Esophagus squamous epithelium (tissue), 5 donors: ENCODE measurements at regions of chr4 and their contacts with region 1.

Region 1: DNA sequence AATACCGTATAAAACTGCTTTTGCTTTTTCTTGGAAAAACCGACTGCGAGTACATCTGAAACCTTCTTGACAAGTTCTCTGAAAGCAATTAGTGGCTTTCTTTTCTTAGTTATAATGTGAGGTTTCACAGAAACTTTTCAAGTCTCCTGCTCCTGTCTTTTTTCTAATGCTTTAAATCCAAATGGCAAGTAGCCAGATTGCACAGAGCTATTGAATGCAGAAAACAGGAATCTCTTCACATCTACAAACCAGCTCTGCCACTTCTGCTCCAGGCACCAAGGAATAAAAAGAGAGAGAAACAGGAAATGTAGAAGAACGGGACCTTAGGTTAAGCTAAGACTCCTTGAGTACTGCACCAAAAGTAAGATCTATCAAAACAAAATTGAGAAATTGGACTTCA is 267.3 kb upstream of the TET2 start:
- DNase-seq: no peak
- H3K4me3 ChIP-seq: no peak overlapping the region
- H3K27ac ChIP-seq: peak overlapping the region in 2 of 4 donors; percentile 28 to 38
- H3K4me1 ChIP-seq: peaks cover 0 to 30% (median 0%) of the 10 kb centered on the region in 3 donors
- H3K27me3 ChIP-seq: no peaks in the 10 kb centered on the region
- CTCF ChIP-seq: no peak
- POLR2A ChIP-seq: no peak

Region 2: DNA sequence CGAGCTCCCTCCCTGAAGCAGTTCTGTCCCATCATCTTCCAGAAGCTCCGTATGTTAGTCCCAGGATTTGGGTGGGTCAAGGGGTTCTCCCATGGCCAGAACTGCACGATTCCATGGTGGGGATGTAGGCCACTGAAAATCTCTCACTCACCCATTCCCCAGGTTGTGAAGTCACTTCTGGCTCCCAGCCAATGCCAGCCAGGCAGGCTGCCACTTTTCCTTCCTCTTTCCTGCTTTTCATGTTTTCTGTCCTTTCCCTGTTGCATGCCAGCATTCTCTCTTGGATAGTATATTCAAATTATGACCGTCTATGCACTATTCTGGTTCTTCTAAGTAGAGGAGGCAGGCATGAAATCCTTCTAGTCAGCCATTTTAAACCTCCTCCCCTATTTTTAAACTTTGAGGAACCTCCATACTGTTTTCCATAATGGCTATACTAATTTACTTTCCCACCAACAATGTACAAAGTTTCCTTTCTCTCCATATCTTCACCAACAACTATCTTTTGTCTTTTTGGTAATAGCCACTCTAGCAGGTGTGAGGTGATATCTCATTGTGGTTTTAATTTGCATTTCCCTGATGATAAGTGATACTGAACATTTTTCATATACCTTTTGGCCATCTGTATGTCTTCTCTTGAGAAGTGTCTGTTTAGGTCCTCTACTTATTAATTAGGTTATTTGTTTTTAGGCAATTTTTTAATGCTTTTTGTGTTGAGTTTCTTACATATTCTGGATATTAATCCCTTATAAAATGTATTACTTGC is 85.2 kb after region 1 on chr4:
- intact Hi-C with region 1: loop called (anchors 5 kb)
- DNase-seq: no peak
- H3K4me3 ChIP-seq: no peak overlapping the region
- H3K27ac ChIP-seq: no peak overlapping the region
- H3K4me1 ChIP-seq: peaks cover 0 to 54% (median 13%) of the 10 kb centered on the region in 3 donors
- H3K27me3 ChIP-seq: no peaks in the 10 kb centered on the region
- CTCF ChIP-seq: no peak
- POLR2A ChIP-seq: no peak

Region 3: DNA sequence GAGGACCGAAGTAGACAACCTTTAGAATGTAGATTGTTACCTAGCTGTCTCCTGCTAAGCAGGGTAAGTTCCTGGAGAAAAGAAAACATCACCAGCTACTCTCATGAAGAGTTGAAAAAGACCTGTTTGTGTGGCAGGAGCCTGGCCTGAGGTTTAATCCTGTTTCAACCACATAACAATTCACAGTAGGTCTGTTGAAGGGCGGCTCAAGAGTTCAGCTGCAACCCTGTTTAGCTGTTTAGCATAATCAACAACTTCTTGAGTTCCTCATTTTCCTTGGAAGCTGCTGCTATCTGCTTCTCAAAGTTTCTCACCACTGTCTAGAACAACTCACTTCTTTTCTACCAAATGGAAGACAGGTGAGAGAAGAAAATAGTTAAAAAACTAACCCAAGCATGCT is 96.9 kb after region 1 on chr4:
- intact Hi-C with region 1: no loop called
- DNase-seq: no peak
- H3K4me3 ChIP-seq: no peak overlapping the region
- H3K27ac ChIP-seq: no peak overlapping the region
- H3K4me1 ChIP-seq: peaks cover 0 to 19% (median 0%) of the 10 kb centered on the region in 3 donors
- H3K27me3 ChIP-seq: no peaks in the 10 kb centered on the region
- CTCF ChIP-seq: no peak
- POLR2A ChIP-seq: no peak